Heart left ventricle (tissue), 16 donors: ENCODE measurements at regions of chr10 and their contacts with region 1.

Region 1: GRCh38 chr10:80444646-80445319 is 9.3 kb upstream of the TSPAN14 start:
- DNase-seq: peak; percentile 62 to 82 (median 74)
- ATAC-seq: peak; percentile 73 to 96 (median 92)
- H3K4me3 ChIP-seq: no peak overlapping the region
- H3K27ac ChIP-seq: peak overlapping the region in 1 of 12 donors; percentile 17
- H3K4me1 ChIP-seq: peaks cover 0 to 38% (median 9%) of the 10 kb centered on the region in 12 donors
- H3K27me3 ChIP-seq: no peaks in the 10 kb centered on the region
- CTCF ChIP-seq: peak; percentile 60 to 94 (median 78)
- POLR2A ChIP-seq: no peak

Region 2: GRCh38 chr10:80158598-80159127 is 286.1 kb before region 1 on chr10:
- intact Hi-C with region 1: no loop called
- DNase-seq: peak; percentile 89 to 96 (median 92)
- ATAC-seq: peak; percentile 80 to 96 (median 92)
- H3K4me3 ChIP-seq: peak overlapping the region in 1 of 12 donors; percentile 18
- H3K27ac ChIP-seq: peak overlapping the region in 11 of 12 donors; percentile 65 to 91 (median 84)
- H3K4me1 ChIP-seq: peaks cover 12 to 66% (median 39%) of the 10 kb centered on the region in 12 donors
- H3K27me3 ChIP-seq: no peaks in the 10 kb centered on the region
- CTCF ChIP-seq: no peak
- POLR2A ChIP-seq: peak in 1 of 2 donors; percentile 19

Region 3: DNA sequence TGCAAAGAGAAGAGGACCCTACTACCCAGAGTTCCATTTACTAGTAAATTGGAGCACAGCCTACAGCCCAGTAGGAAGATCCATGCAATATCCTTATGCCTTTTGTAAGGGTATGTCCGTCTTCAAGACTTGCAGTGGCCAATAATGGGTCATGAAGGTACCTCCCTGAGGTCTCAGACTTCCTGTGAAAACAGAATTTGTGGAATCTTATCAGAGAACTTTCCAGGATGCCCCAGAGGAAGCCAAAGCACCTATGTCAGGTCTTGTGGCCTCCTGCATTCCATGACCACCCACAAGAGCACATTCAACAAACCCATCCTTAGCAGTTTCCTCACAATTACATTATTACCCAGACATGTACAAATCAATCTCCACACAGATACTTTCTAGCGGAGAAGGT is 55.0 kb before region 1 on chr10:
- intact Hi-C with region 1: loop called in 3 of 10 experiments (anchors 5 kb)
- DNase-seq: no peak
- ATAC-seq: no peak
- H3K4me3 ChIP-seq: no peak overlapping the region
- H3K27ac ChIP-seq: peak overlapping the region in 1 of 12 donors; percentile 65
- H3K4me1 ChIP-seq: peaks cover 0 to 40% (median 3%) of the 10 kb centered on the region in 12 donors
- H3K27me3 ChIP-seq: no peaks in the 10 kb centered on the region
- CTCF ChIP-seq: no peak
- POLR2A ChIP-seq: no peak

Region 4: GRCh38 chr10:80493522-80494051 is 48.8 kb after region 1 on chr10:
- intact Hi-C with region 1: no loop called
- DNase-seq: no peak
- ATAC-seq: peak in 2 of 4 donors; percentile 5 to 45
- H3K4me3 ChIP-seq: no peak overlapping the region
- H3K27ac ChIP-seq: peak overlapping the region in 8 of 12 donors; percentile 11 to 95 (median 24)
- H3K4me1 ChIP-seq: peaks cover 35 to 99% (median 62%) of the 10 kb centered on the region in 12 donors
- H3K27me3 ChIP-seq: no peaks in the 10 kb centered on the region
- CTCF ChIP-seq: no peak
- POLR2A ChIP-seq: no peak

Region 5: DNA sequence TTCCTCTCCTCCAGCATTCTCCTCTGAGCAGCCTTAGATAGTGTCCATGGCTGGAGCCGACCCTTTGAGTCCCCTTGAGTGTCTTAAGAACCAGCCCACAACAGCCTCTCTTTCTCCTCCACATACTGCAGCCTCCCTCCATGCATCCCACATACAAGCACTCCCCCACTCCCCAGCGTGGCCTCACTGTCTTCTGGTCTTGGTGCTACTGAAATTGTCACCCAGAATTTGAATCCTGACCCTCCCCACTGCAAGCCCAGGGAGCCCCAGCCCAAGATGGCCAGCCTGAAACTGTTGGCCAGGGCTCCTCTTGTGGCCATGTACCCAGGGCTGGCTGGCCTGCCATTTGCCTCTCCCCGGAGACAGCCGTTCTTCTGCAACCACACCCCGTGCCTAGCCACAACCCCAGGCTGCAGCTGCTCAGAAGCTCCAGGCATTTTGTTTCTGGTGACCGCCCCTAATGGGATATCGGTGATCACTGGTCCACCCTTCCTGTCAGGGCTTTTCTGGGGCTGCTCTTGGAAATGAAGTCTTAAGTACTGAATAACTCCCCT is 74.1 kb after region 1 on chr10:
- intact Hi-C with region 1: no loop called
- DNase-seq: peak in 3 of 5 donors; percentile 45 to 70 (median 55)
- ATAC-seq: peak; percentile 32 to 79 (median 56)
- H3K4me3 ChIP-seq: no peak overlapping the region
- H3K27ac ChIP-seq: peak overlapping the region in 11 of 12 donors; percentile 3 to 67 (median 56)
- H3K4me1 ChIP-seq: peaks cover 3 to 49% (median 31%) of the 10 kb centered on the region in 12 donors
- H3K27me3 ChIP-seq: no peaks in the 10 kb centered on the region
- CTCF ChIP-seq: no peak
- POLR2A ChIP-seq: no peak

Region 6: DNA sequence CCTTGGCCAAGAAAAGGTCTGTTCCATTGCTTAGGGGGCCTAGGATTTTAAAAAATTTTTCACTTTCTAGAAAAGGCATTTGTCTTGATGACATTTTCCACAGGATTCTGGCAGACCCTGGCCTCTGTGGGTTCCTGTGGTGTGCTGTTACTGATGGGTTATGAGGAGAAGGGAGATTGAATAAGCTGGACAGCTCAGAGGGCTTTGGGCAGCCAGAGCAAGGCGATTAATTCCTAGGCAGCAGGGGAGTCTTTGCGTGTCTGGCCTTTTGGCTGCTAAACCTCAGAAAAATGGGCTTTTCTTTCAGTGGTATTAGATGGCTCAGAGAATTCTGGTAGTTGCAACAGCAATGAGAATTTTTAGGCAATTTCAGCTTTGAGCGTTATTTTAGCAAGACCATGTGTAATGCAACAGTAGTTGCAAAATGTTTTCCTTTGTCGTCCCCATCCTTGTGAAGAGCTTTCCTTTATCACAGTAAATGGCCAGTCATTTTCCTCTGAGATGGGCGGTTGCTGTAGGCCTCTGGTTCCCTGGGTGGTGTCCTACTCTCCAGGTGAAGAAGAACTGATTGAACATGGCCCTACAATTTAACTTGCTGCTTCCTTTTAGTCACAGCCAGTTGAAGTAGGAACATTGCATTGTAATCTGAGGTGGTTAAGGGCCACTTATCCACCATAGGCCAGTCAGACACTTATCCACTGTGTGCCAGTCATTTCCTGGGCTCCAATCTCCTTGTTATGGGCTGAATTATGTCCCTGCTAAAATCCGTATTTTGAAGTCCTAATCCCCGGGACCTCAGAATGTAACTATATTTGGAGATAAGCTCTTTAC is 136.1 kb after region 1 on chr10:
- intact Hi-C with region 1: loop called in 5 of 10 experiments (anchors 5 to 10 kb)
- DNase-seq: no peak
- ATAC-seq: no peak
- H3K4me3 ChIP-seq: no peak overlapping the region
- H3K27ac ChIP-seq: no peak overlapping the region
- H3K4me1 ChIP-seq: peaks cover 0 to 15% (median 0%) of the 10 kb centered on the region in 12 donors
- H3K27me3 ChIP-seq: no peaks in the 10 kb centered on the region
- CTCF ChIP-seq: no peak
- POLR2A ChIP-seq: no peak

Region 7: GRCh38 chr10:80599424-80599847 is 154.7 kb after region 1 on chr10:
- intact Hi-C with region 1: loop called in 3 of 10 experiments (anchors 5 to 10 kb)
- DNase-seq: peak; percentile 25 to 76 (median 40)
- ATAC-seq: peak in 3 of 4 donors; percentile 68 to 89 (median 88)
- H3K4me3 ChIP-seq: no peak overlapping the region
- H3K27ac ChIP-seq: no peak overlapping the region
- H3K4me1 ChIP-seq: peaks cover 0 to 16% (median 0%) of the 10 kb centered on the region in 12 donors
- H3K27me3 ChIP-seq: no peaks in the 10 kb centered on the region
- CTCF ChIP-seq: peak; percentile 45 to 77 (median 60)
- POLR2A ChIP-seq: no peak

Region 8: GRCh38 chr10:80924063-80924952 is 479.5 kb after region 1 on chr10:
- intact Hi-C with region 1: loop called in 7 of 10 experiments (anchors 2 to 10 kb)
- DNase-seq: peak in 3 of 5 donors; percentile 27 to 43 (median 32)
- ATAC-seq: peak in 2 of 4 donors; percentile 36 to 49
- H3K4me3 ChIP-seq: no peak overlapping the region
- H3K27ac ChIP-seq: no peak overlapping the region
- H3K4me1 ChIP-seq: no peaks in the 10 kb centered on the region
- H3K27me3 ChIP-seq: peaks cover 0 to 8% (median 0%) of the 10 kb centered on the region in 9 donors
- CTCF ChIP-seq: peak; percentile 60 to 83 (median 67)
- POLR2A ChIP-seq: no peak